Dendritic cell treated with granulocyte-macrophage colony-stimulating factor and Interleukin-4, amounts not matched to agents 40 ng/mL and 50 ng/mL, for 4 days (primary cell): ENCODE measurements at regions of chr12 and their contacts with region 1.

Region 1: GRCh38 chr12:53543539-53543938 is 36.3 kb upstream of the NPFF start:
- H3K4me3 Mint-ChIP-seq: no peak overlapping the region
- H3K27ac Mint-ChIP-seq: no peak overlapping the region
- H3K4me1 Mint-ChIP-seq: peaks cover 4% of the 10 kb centered on the region
- H3K27me3 Mint-ChIP-seq: no peaks in the 10 kb centered on the region

Region 2: GRCh38 chr12:53443955-53444354 is 99.6 kb before region 1 on chr12:
- intact Hi-C with region 1: no loop called
- H3K4me3 Mint-ChIP-seq: peak overlapping the region; percentile 93
- H3K27ac Mint-ChIP-seq: peak overlapping the region; percentile 97
- H3K4me1 Mint-ChIP-seq: peaks cover 43% of the 10 kb centered on the region
- H3K27me3 Mint-ChIP-seq: no peaks in the 10 kb centered on the region

Region 3: GRCh38 chr12:53530920-53531319 is 12.6 kb before region 1 on chr12:
- intact Hi-C with region 1: no loop called
- H3K4me3 Mint-ChIP-seq: no peak overlapping the region
- H3K27ac Mint-ChIP-seq: no peak overlapping the region
- H3K4me1 Mint-ChIP-seq: peaks cover 32% of the 10 kb centered on the region
- H3K27me3 Mint-ChIP-seq: no peaks in the 10 kb centered on the region

Region 4: GRCh38 chr12:53575502-53576253 is 32.1 kb after region 1 on chr12:
- intact Hi-C with region 1: loop called (anchors 5 kb)
- H3K4me3 Mint-ChIP-seq: no peak overlapping the region
- H3K27ac Mint-ChIP-seq: peak overlapping the region; percentile 84
- H3K4me1 Mint-ChIP-seq: peaks cover 66% of the 10 kb centered on the region
- H3K27me3 Mint-ChIP-seq: no peaks in the 10 kb centered on the region

Region 5: GRCh38 chr12:53675651-53676453 is 132.3 kb after region 1 on chr12 and contains the start of gene ATP5MC2:
- intact Hi-C with region 1: loop called (anchors 2 kb)
- H3K4me3 Mint-ChIP-seq: peak within 1 kb of the TSS; percentile 83
- H3K27ac Mint-ChIP-seq: peak within 1 kb of the TSS; percentile 95
- H3K4me1 Mint-ChIP-seq: peaks cover 32% of the 10 kb centered on the region
- H3K27me3 Mint-ChIP-seq: peaks cover 13% of the 10 kb centered on the region